Breast epithelium (tissue), 4 donors: ENCODE measurements at regions of chr16 and their contacts with region 1.

Region 1: DNA sequence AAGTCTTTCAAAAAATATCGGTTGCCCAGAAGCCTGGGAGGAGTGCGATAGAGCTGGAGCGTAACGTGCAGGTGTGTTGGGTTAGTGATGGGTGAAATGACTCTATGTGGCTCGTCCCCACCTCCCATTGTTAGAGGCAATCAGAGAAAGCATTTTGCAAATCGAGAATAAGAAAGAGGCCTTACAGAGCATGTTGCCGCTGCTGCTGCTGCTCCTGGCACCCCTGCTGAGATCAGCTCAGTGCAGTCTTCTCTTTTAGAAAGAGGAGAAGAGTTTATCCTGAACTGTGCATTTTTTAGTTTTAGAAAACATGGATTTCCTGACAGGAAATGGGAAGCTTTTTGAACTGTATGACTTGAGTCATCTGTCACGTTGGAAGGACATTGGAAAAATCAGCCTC is 774.5 kb upstream of the RBFOX1 start:
- DNase-seq: no peak
- H3K4me3 ChIP-seq: no peak overlapping the region
- H3K27ac ChIP-seq: no peak overlapping the region
- H3K4me1 ChIP-seq: no peaks in the 10 kb centered on the region
- H3K27me3 ChIP-seq: no peaks in the 10 kb centered on the region
- CTCF ChIP-seq: no peak
- POLR2A ChIP-seq: no peak

Region 2: GRCh38 chr16:5604770-5605169 is 953.4 kb before region 1 on chr16:
- intact Hi-C with region 1: no loop called
- DNase-seq: no peak
- H3K4me3 ChIP-seq: no peak overlapping the region
- H3K27ac ChIP-seq: no peak overlapping the region
- H3K4me1 ChIP-seq: no peaks in the 10 kb centered on the region
- H3K27me3 ChIP-seq: no peaks in the 10 kb centered on the region
- CTCF ChIP-seq: peak in 1 of 3 donors; percentile 33
- POLR2A ChIP-seq: no peak

Region 3: DNA sequence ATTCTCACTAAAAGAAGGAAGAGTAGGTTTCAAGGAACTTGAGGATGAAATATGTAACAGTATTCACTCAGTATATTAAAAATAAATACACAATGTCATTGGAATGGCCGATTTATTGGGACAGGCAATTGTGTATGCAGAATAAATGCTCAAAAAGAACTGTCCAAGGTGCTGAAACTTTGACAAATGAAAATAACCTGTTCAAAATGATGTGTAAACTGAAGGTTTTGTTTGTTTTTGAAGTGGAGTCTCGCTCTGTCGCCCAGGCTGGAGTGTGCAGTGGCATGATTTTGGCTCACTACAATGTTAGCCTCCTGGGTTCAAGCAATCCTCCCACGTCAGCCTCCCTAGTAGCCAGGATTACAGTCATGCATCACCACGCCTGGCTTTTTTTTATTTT is 455.9 kb after region 1 on chr16:
- intact Hi-C with region 1: loop called (anchors 5 kb)
- DNase-seq: no peak
- H3K4me3 ChIP-seq: no peak overlapping the region
- H3K27ac ChIP-seq: no peak overlapping the region
- H3K4me1 ChIP-seq: no peaks in the 10 kb centered on the region
- H3K27me3 ChIP-seq: no peaks in the 10 kb centered on the region
- CTCF ChIP-seq: no peak
- POLR2A ChIP-seq: no peak